H1 (cell line): ENCODE measurements at regions of chr4 and their contacts with region 1.

Region 1: GRCh38 chr4:52883707-52884676 is 21.9 kb downstream of the RASL11B start:
- DNase-seq: no peak
- H3K4me3 ChIP-seq: no peak overlapping the region
- H3K27ac ChIP-seq: no peak overlapping the region
- H3K4me1 ChIP-seq: peaks cover 2 to 16% (median 9%) of the 10 kb centered on the region in 4 experiments; a peak in 5 of 7 replicates
- H3K27me3 ChIP-seq: no peaks in the 10 kb centered on the region
- CTCF ChIP-seq: no peak
- EP300 ChIP-seq: no peak
- POLR2A ChIP-seq: no peak
- RAD21 ChIP-seq: no peak

Region 2: GRCh38 chr4:52869196-52869595 is 14.8 kb before region 1 on chr4:
- CTCF ChIA-PET with region 1: interaction called, 5 read pairs
- POLR2A ChIA-PET with region 1: interaction called, 14 read pairs
- DNase-seq: no peak
- H3K4me3 ChIP-seq: no peak overlapping the region
- H3K27ac ChIP-seq: no peak overlapping the region
- H3K4me1 ChIP-seq: peaks cover 7 to 24% (median 15%) of the 10 kb centered on the region in 4 experiments
- H3K27me3 ChIP-seq: no peaks in the 10 kb centered on the region; a peak in 2 of 7 replicates
- CTCF ChIP-seq: no peak
- EP300 ChIP-seq: no peak
- POLR2A ChIP-seq: no peak
- RAD21 ChIP-seq: no peak